CD8-positive, alpha-beta T cell (primary cell): ENCODE measurements at regions of chr16 and their contacts with region 1.

Region 1: GRCh38 chr16:89700100-89700648 is 1.3 kb downstream of the SPATA2L start:
- DNase-seq: peak; percentile 89 to 99 (median 96)
- ATAC-seq: peak; percentile 11
- H3K4me3 ChIP-seq: peak overlapping the region; percentile 50 to 96
- H3K4me3 Mint-ChIP-seq: peak overlapping the region; percentile 80
- H3K27ac ChIP-seq: peak overlapping the region; percentile 82 to 97
- H3K27ac Mint-ChIP-seq: peak overlapping the region; percentile 90
- H3K4me1 ChIP-seq: peaks cover 35% of the 10 kb centered on the region
- H3K4me1 Mint-ChIP-seq: peaks cover 16% of the 10 kb centered on the region
- H3K27me3 ChIP-seq: no peaks in the 10 kb centered on the region
- H3K27me3 Mint-ChIP-seq: no peaks in the 10 kb centered on the region
- CTCF ChIP-seq: peak; percentile 89

Region 2: DNA sequence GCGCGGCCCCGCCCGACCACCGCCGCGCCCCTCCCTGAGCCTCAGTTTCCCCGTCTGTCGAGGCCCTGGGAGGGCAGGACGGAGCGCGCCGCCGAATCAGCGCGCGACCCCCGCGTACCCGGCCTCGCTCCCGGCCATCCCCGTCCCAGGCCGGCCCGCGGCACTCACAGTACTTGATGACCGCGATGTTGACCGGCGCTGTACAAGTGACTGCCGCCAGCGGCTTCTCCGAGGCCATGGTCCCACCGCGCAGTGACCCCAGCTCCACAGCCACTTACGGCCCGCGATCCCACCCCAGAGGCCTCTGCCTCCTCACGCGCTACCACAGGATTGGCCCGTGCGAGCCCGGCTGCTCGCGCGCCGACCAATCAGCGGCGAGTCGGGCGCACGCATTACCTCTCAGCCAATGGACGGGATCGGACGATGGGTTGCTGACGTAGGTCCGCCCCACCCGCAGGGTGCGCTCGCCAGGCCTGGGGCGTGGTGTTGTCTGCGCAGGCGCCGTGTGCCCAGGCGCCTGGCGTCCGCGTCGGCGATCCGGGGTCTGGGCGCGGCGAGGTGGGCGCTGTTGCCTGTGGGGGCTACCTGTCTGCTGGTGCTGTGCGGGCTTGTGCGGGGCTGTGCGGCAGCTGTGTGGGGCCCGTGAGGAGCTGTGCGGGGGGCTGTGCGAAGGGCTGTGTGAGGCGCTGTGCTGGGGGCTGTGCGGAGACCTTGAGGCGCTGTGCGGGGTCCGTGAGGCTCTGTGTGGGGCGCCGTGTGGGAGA is 1037.1 kb before region 1 on chr16 and contains the start of gene MVD:
- CTCF ChIA-PET with region 1: no interaction called
- POLR2A ChIA-PET with region 1: no interaction called
- intact Hi-C with region 1: loop called in 1 of 2 experiments (anchors 5 kb)
- DNase-seq: peak; percentile 88 to 99 (median 95)
- ATAC-seq: peak; percentile 96
- H3K4me3 ChIP-seq: peak within 1 kb of the TSS; percentile 81 to 85
- H3K4me3 Mint-ChIP-seq: peak within 1 kb of the TSS; percentile 94
- H3K27ac ChIP-seq: peak within 1 kb of the TSS; percentile 84 to 87
- H3K27ac Mint-ChIP-seq: peak within 1 kb of the TSS; percentile 95
- H3K4me1 ChIP-seq: peaks cover 15% of the 10 kb centered on the region
- H3K4me1 Mint-ChIP-seq: peaks cover 20% of the 10 kb centered on the region
- H3K27me3 ChIP-seq: no peaks in the 10 kb centered on the region
- H3K27me3 Mint-ChIP-seq: no peaks in the 10 kb centered on the region
- CTCF ChIP-seq: no peak
- total RNA-seq, gene MVD: 118 to 124 TPM

Region 3: GRCh38 chr16:89222931-89223330 is 477.2 kb before region 1 on chr16:
- CTCF ChIA-PET with region 1: no interaction called
- POLR2A ChIA-PET with region 1: no interaction called
- intact Hi-C with region 1: no loop called
- DNase-seq: no peak
- ATAC-seq: no peak
- H3K4me3 ChIP-seq: no peak overlapping the region
- H3K4me3 Mint-ChIP-seq: no peak overlapping the region
- H3K27ac ChIP-seq: no peak overlapping the region
- H3K27ac Mint-ChIP-seq: no peak overlapping the region
- H3K4me1 ChIP-seq: peaks cover 5% of the 10 kb centered on the region
- H3K4me1 Mint-ChIP-seq: peaks cover 17% of the 10 kb centered on the region
- H3K27me3 ChIP-seq: no peaks in the 10 kb centered on the region
- H3K27me3 Mint-ChIP-seq: no peaks in the 10 kb centered on the region
- CTCF ChIP-seq: no peak

Region 4: GRCh38 chr16:89560378-89561141 is 139.6 kb before region 1 on chr16 and contains the start of gene RPL13:
- CTCF ChIA-PET with region 1: interaction called, 4 read pairs
- POLR2A ChIA-PET with region 1: no interaction called
- intact Hi-C with region 1: loop called in 1 of 2 experiments (anchors 1 kb)
- DNase-seq: peak; percentile 81 to 97 (median 93)
- ATAC-seq: peak; percentile 89
- H3K4me3 ChIP-seq: peak within 1 kb of the TSS; percentile 73 to 90
- H3K4me3 Mint-ChIP-seq: peak within 1 kb of the TSS; percentile 89
- H3K27ac ChIP-seq: peak within 1 kb of the TSS; percentile 90 to 97
- H3K27ac Mint-ChIP-seq: peak within 1 kb of the TSS; percentile 93
- H3K4me1 ChIP-seq: peaks cover 54% of the 10 kb centered on the region
- H3K4me1 Mint-ChIP-seq: peaks cover 51% of the 10 kb centered on the region
- H3K27me3 ChIP-seq: no peaks in the 10 kb centered on the region
- H3K27me3 Mint-ChIP-seq: no peaks in the 10 kb centered on the region
- CTCF ChIP-seq: no peak
- total RNA-seq, gene RPL13: 4,632 to 4,668 TPM

Region 5: DNA sequence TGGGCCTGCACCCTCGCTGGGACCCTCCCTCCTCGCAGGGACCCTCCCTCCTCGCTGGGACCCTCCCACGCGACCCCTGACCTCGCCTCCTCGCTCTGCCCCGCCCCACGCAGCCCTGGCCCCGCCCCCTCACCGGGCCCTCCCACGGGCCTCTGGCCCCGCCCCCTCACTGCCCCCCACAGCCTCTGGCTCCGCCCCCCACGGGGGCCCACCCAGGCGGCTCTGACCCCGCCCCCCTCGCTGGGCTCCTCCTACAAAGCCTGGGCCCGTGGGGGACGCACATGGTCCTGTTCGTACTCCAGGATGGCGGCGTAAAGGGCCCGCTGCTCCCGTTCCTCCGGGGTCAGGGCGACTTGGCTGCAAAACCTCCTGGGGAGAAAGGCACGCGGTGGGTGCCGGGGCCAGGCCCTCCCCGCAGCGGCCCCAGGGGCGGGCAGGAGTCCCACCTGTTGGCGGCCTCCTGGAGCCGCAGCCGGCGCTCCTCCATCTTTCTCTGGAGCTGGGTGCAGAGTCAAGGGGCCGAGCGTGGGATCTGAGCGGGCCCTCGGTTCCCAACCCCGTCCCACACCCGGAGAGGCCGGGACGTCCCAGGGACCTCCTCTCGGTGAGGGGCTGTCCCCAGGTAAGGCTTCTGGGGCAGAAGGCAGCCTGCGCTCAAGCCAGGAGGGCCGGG is 11.6 kb after region 1 on chr16:
- CTCF ChIA-PET with region 1: interaction called, 21 read pairs
- POLR2A ChIA-PET with region 1: no interaction called
- intact Hi-C with region 1: loop called in 1 of 2 experiments (anchors 1 kb)
- DNase-seq: peak; percentile 55 to 87 (median 71)
- ATAC-seq: peak; percentile 98
- H3K4me3 ChIP-seq: peak overlapping the region; percentile 48 to 68
- H3K4me3 Mint-ChIP-seq: peak overlapping the region; percentile 65
- H3K27ac ChIP-seq: no peak overlapping the region
- H3K27ac Mint-ChIP-seq: no peak overlapping the region
- H3K4me1 ChIP-seq: peaks cover 12% of the 10 kb centered on the region
- H3K4me1 Mint-ChIP-seq: peaks cover 1% of the 10 kb centered on the region
- H3K27me3 ChIP-seq: no peaks in the 10 kb centered on the region
- H3K27me3 Mint-ChIP-seq: no peaks in the 10 kb centered on the region
- CTCF ChIP-seq: no peak

Region 6: DNA sequence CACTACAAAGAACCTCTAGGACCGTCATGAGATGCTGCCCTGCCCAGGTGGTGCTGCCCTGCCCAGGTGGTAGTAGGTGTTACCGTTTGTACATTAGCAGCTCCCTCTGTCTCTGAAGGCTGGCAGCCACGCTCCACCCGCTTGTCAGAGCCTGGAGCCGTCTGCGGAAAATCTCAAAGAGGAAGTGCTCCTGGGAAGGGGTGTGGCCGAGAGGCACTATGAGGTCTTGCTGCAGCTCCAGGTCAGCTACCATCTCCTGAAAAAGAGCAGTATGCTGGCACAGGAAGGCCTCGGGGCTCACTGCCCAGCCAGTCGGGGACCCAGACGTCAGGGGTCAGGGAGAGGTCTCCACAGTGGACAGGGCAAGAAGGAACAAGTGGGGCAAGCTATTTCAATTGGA is 49.5 kb after region 1 on chr16:
- CTCF ChIA-PET with region 1: interaction called, 25 read pairs
- POLR2A ChIA-PET with region 1: no interaction called
- intact Hi-C with region 1: no loop called
- DNase-seq: no peak
- ATAC-seq: no peak
- H3K4me3 ChIP-seq: no peak overlapping the region
- H3K4me3 Mint-ChIP-seq: no peak overlapping the region
- H3K27ac ChIP-seq: no peak overlapping the region
- H3K27ac Mint-ChIP-seq: no peak overlapping the region
- H3K4me1 ChIP-seq: peaks cover 27% of the 10 kb centered on the region
- H3K4me1 Mint-ChIP-seq: peaks cover 15% of the 10 kb centered on the region
- H3K27me3 ChIP-seq: no peaks in the 10 kb centered on the region
- H3K27me3 Mint-ChIP-seq: no peaks in the 10 kb centered on the region
- CTCF ChIP-seq: no peak

Region 7: DNA sequence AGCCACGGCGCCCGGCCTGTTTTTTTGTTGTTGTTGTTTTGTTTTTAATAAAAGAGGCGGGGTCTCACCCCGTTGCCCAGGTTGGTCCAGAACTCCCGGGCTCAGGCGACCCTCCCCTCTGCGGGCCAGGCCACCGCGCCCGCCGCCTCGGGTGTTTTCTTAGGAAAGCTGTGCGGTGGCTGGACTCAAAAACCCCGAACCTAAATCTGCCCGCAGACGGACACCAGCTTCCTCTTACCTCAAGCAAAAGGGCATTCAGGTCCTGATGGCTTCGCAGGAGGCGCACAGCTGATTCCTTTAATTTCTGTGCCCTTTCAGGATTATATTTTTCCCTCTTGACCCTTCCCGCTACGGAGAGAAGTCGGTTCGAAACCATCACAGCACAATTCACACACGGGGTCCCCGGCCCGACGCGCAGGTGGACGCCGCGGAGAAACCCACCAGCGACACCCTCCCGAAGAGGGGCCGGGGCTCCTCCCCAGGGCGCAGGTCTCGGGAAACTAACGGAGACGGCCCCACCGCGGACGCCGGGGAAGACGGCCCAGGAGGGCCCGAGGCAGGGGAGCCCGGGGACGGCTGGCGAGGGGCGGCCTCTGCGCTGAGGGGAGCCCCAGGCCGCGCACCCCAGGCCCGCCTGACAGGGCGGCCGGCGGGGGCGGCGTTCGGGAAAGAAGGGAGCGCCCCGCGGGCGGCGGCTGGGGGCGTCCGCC is 115.6 kb after region 1 on chr16:
- CTCF ChIA-PET with region 1: interaction called, 6 read pairs
- POLR2A ChIA-PET with region 1: interaction called, 5 read pairs
- intact Hi-C with region 1: loop called (anchors 1 kb)
- DNase-seq: peak in 1 of 9 experiments; percentile 19
- ATAC-seq: peak; percentile 12
- H3K4me3 ChIP-seq: peak overlapping the region in 1 of 2 experiments; percentile 34
- H3K4me3 Mint-ChIP-seq: peak overlapping the region; percentile 80
- H3K27ac ChIP-seq: no peak overlapping the region
- H3K27ac Mint-ChIP-seq: no peak overlapping the region
- H3K4me1 ChIP-seq: peaks cover 13% of the 10 kb centered on the region
- H3K4me1 Mint-ChIP-seq: peaks cover 10% of the 10 kb centered on the region
- H3K27me3 ChIP-seq: peaks cover 0 to 7% of the 10 kb centered on the region in 2 experiments
- H3K27me3 Mint-ChIP-seq: no peaks in the 10 kb centered on the region
- CTCF ChIP-seq: no peak

Region 8: GRCh38 chr16:89909777-89910716 is 209.9 kb after region 1 on chr16:
- CTCF ChIA-PET with region 1: interaction called, 22 read pairs
- POLR2A ChIA-PET with region 1: no interaction called
- intact Hi-C with region 1: loop called (anchors 1 to 2 kb)
- DNase-seq: peak; percentile 43 to 80 (median 72)
- ATAC-seq: peak; percentile 83
- H3K4me3 ChIP-seq: no peak overlapping the region
- H3K4me3 Mint-ChIP-seq: no peak overlapping the region
- H3K27ac ChIP-seq: no peak overlapping the region
- H3K27ac Mint-ChIP-seq: no peak overlapping the region
- H3K4me1 ChIP-seq: peaks cover 4% of the 10 kb centered on the region
- H3K4me1 Mint-ChIP-seq: peaks cover 5% of the 10 kb centered on the region
- H3K27me3 ChIP-seq: no peaks in the 10 kb centered on the region
- H3K27me3 Mint-ChIP-seq: no peaks in the 10 kb centered on the region
- CTCF ChIP-seq: peak; percentile 77